Testis (tissue), 5 donors: ENCODE measurements at regions of chr11 and their contacts with region 1.

Region 1: DNA sequence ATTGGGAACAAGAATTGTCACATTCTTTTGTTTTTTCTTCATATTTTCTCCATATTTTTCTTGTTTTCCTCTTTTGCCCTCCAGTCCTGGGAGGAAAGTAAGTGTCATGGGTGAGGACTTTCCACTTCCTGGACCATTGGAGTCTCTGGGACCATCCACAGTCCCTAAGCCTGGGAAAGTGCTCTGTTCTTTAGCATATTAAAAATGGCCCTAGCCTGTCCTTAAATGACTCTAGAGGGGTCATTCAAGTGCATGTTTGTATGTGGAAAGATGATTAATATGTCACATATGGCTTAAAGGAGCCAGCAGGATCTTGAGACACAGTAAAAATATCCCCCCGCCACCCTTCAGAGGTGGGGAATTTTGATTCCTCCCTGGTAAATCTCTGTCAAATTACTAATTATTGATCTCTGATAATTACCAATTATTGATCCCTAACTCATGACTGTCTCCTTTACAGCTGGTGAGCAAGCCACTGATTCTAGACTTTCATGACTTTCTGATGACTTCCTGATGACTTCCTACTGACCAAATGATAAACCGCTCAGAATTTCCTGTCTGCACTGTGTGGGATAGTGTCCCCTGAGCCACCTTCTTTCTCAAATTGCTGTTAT is 20.0 kb upstream of the SCGB1D1 start:
- DNase-seq: no peak
- H3K4me3 ChIP-seq: no peak overlapping the region
- H3K27ac ChIP-seq: peak overlapping the region in 1 of 2 donors; percentile 20
- H3K4me1 ChIP-seq: no peaks in the 10 kb centered on the region
- H3K27me3 ChIP-seq: no peaks in the 10 kb centered on the region
- CTCF ChIP-seq: no peak
- POLR2A ChIP-seq: no peak

Region 2: DNA sequence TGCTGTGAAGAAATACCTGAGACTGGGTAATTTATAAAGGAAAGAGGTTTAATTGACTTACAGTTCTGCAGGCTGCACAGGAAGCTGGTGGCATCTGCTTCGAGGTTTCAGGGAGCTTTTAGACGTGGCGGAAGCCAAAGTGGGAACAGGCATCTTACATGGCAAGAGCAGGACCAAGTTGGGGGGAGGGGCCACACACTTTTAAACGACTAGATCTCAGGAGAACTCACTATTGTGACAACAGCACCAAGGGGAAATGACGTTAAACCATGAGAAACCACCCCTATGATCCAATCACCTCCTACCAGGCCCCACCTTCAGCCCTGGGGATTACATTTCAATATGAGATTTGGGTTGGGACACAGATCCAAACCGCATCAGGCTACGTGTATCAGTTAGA is 139.9 kb after region 1 on chr11:
- intact Hi-C with region 1: loop called (anchors 5 kb)
- DNase-seq: no peak
- H3K4me3 ChIP-seq: no peak overlapping the region
- H3K27ac ChIP-seq: no peak overlapping the region
- H3K4me1 ChIP-seq: no peaks in the 10 kb centered on the region
- H3K27me3 ChIP-seq: no peaks in the 10 kb centered on the region
- CTCF ChIP-seq: no peak
- POLR2A ChIP-seq: no peak